ENCODE measurements at regions of chr17 and their contacts with region 1.

Region 1: GRCh38 chr17:30021708-30022317 is 80.4 kb downstream of the EFCAB5 start:
- DNase-seq: peak in 1 of 2 experiments; percentile 14
- H3K4me3 ChIP-seq: no peak overlapping the region
- H3K27ac ChIP-seq: no peak overlapping the region
- H3K4me1 ChIP-seq: no peaks in the 10 kb centered on the region; the same call in 1 of the 2 replicates
- H3K27me3 ChIP-seq: no peaks in the 10 kb centered on the region
- CTCF ChIP-seq: peak; percentile 93

Region 2: GRCh38 chr17:29180034-29180787 is 841.6 kb before region 1 on chr17 and contains the start of gene MYO18A:
- CTCF ChIA-PET with region 1: no interaction called
- POLR2A ChIA-PET with region 1: no interaction called
- intact Hi-C with region 1: no loop called
- DNase-seq: peak; percentile 54 to 79
- H3K4me3 ChIP-seq: peak within 1 kb of the TSS; percentile 71
- H3K27ac ChIP-seq: peak within 1 kb of the TSS; percentile 97
- H3K4me1 ChIP-seq: peaks cover 47% of the 10 kb centered on the region
- H3K27me3 ChIP-seq: no peaks in the 10 kb centered on the region
- CTCF ChIP-seq: peak; percentile 78
- total RNA-seq, gene MYO18A: 150 and 158 TPM in 2 replicates

Region 3: DNA sequence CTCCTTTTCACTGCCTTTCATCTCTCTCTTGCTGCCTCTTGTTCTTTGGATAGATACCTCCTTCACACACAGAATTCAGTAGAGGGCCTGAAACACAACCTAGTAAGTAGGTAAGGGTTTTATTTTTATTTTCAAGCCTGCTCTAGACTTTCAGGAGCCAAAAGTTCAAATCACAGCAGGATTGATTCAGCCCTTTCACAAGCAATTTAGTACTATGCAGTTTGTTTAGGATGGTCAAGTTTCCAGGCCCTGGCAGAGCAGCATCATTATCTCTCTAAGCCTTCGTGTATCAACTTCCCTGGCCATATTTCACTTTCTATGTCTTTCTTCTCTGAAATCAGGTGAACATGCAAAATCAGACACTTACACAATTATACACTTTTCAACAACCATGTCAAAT is 250.3 kb before region 1 on chr17:
- CTCF ChIA-PET with region 1: interaction called, 10 read pairs
- POLR2A ChIA-PET with region 1: no interaction called
- intact Hi-C with region 1: no loop called
- DNase-seq: no peak
- H3K4me3 ChIP-seq: no peak overlapping the region
- H3K27ac ChIP-seq: no peak overlapping the region
- H3K4me1 ChIP-seq: no peaks in the 10 kb centered on the region
- H3K27me3 ChIP-seq: no peaks in the 10 kb centered on the region
- CTCF ChIP-seq: no peak

Measured in PC-9 (cell line).